CD8-positive, alpha-beta T cell (primary cell): ENCODE measurements at regions of chr11 and their contacts with region 1.

Region 1: DNA sequence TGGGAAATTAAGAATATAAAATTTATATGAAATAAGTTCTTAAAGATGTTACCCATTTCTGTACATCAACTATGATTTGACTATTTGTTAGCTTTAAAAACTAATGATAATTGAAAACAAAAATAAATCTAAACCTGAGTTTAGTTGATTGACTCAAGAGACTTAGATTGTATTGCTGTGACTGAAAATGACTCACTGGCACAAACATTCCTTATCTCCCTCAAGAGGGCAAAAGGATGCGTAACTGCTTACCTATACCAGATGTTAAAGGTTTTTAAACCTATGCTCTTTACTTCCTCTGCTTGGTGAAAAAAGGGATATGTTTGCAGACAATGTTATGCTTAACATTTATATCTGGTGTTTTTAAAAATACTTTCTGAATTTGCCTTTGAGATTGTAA is 30.3 kb downstream of the ATM start:
- DNase-seq: peak in 1 of 9 experiments; percentile 46
- ATAC-seq: peak; percentile 76
- H3K4me3 ChIP-seq: no peak overlapping the region
- H3K4me3 Mint-ChIP-seq: no peak overlapping the region
- H3K27ac ChIP-seq: peak overlapping the region in 1 of 2 experiments; percentile 41
- H3K27ac Mint-ChIP-seq: peak overlapping the region; percentile 64
- H3K4me1 ChIP-seq: peaks cover 45% of the 10 kb centered on the region
- H3K4me1 Mint-ChIP-seq: peaks cover 57% of the 10 kb centered on the region
- H3K27me3 ChIP-seq: no peaks in the 10 kb centered on the region
- H3K27me3 Mint-ChIP-seq: no peaks in the 10 kb centered on the region
- CTCF ChIP-seq: no peak

Region 2: DNA sequence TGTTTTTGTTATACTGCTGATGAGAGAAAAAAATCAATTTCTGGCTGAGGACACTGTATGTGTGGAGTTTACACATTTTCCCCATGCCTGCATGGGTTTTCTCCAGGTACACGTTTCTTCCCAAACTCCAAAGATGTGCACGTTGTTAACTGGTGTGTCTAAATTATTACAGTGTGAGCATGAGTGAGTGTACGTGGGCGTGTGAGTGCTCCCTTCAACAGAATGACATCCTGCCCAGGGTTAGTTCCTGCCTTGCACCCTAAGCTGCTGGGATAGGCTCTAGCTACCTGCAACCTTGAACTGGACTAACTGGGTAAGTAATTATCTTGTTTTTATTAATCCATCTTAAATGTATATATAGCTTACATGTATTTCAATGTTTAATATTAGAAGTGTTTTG is 36.2 kb before region 1 on chr11:
- CTCF ChIA-PET with region 1: no interaction called
- POLR2A ChIA-PET with region 1: interaction called, 40 read pairs
- intact Hi-C with region 1: loop called in 1 of 2 experiments (anchors 5 kb)
- DNase-seq: peak in 1 of 9 experiments; percentile 43
- ATAC-seq: peak; percentile 51
- H3K4me3 ChIP-seq: no peak overlapping the region
- H3K4me3 Mint-ChIP-seq: peak overlapping the region; percentile 47
- H3K27ac ChIP-seq: no peak overlapping the region
- H3K27ac Mint-ChIP-seq: peak overlapping the region; percentile 53
- H3K4me1 ChIP-seq: peaks cover 71% of the 10 kb centered on the region
- H3K4me1 Mint-ChIP-seq: peaks cover 76% of the 10 kb centered on the region
- H3K27me3 ChIP-seq: no peaks in the 10 kb centered on the region
- H3K27me3 Mint-ChIP-seq: no peaks in the 10 kb centered on the region
- CTCF ChIP-seq: no peak

Region 3: DNA sequence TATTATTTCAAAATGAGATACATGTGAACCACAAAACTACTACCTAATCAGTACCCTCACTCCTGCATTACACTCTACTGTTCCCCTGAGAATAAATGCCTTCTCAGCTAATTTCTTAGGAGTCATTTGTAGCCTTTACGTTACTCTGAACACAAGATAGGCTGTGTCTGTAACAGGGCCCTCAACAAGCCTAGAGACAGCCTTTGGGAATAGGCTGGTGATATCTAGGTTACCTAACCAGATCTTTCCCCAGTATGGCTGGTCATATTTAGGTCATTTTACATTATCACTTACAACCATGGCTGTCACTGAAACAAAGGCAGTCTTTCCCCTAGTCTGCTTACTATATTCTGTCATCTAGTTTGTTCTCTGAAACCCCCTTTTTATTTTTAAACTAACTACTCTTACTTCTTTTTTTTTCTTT is 16.1 kb before region 1 on chr11:
- CTCF ChIA-PET with region 1: interaction called, 6 read pairs
- POLR2A ChIA-PET with region 1: interaction called, 28 read pairs
- intact Hi-C with region 1: loop called in 1 of 2 experiments (anchors 1 kb)
- DNase-seq: peak in 2 of 9 experiments; percentile 59 to 75
- ATAC-seq: peak; percentile 39
- H3K4me3 ChIP-seq: peak overlapping the region; percentile 2 to 35
- H3K4me3 Mint-ChIP-seq: peak overlapping the region; percentile 72
- H3K27ac ChIP-seq: peak overlapping the region; percentile 57 to 82
- H3K27ac Mint-ChIP-seq: peak overlapping the region; percentile 96
- H3K4me1 ChIP-seq: peaks cover 95% of the 10 kb centered on the region
- H3K4me1 Mint-ChIP-seq: peaks cover 83% of the 10 kb centered on the region
- H3K27me3 ChIP-seq: no peaks in the 10 kb centered on the region
- H3K27me3 Mint-ChIP-seq: no peaks in the 10 kb centered on the region
- CTCF ChIP-seq: no peak

Region 4: GRCh38 chr11:108269583-108269982 is 16.4 kb after region 1 on chr11:
- CTCF ChIA-PET with region 1: interaction called, 3 read pairs
- POLR2A ChIA-PET with region 1: no interaction called
- intact Hi-C with region 1: loop called in 1 of 2 experiments (anchors 2 kb)
- DNase-seq: no peak
- ATAC-seq: no peak
- H3K4me3 ChIP-seq: no peak overlapping the region
- H3K4me3 Mint-ChIP-seq: no peak overlapping the region
- H3K27ac ChIP-seq: no peak overlapping the region
- H3K27ac Mint-ChIP-seq: peak overlapping the region; percentile 68
- H3K4me1 ChIP-seq: peaks cover 9% of the 10 kb centered on the region
- H3K4me1 Mint-ChIP-seq: peaks cover 29% of the 10 kb centered on the region
- H3K27me3 ChIP-seq: no peaks in the 10 kb centered on the region
- H3K27me3 Mint-ChIP-seq: no peaks in the 10 kb centered on the region
- CTCF ChIP-seq: no peak

Region 5: DNA sequence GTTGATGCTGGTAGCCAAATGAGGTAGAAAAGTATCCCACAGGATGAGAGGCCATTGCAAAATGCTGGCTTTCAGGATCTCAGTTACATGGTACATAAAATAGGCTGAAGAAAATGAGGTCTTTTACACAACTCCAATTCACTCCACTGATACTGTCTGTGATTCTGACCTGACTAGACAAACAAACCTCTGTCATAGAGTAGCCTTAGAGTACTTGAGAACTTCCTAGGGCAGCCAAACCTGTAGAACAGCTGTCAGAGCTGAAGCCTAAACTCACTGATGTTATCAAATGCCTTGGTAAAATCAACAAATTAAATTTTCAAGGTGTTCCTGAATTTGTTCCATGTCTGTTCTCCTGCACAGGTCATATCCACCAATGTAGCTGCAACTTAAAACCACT is 271.3 kb after region 1 on chr11:
- CTCF ChIA-PET with region 1: no interaction called
- POLR2A ChIA-PET with region 1: no interaction called
- intact Hi-C with region 1: no loop called
- DNase-seq: no peak
- ATAC-seq: no peak
- H3K4me3 ChIP-seq: no peak overlapping the region
- H3K4me3 Mint-ChIP-seq: no peak overlapping the region
- H3K27ac ChIP-seq: no peak overlapping the region
- H3K27ac Mint-ChIP-seq: no peak overlapping the region
- H3K4me1 ChIP-seq: no peaks in the 10 kb centered on the region
- H3K4me1 Mint-ChIP-seq: no peaks in the 10 kb centered on the region
- H3K27me3 ChIP-seq: no peaks in the 10 kb centered on the region
- H3K27me3 Mint-ChIP-seq: no peaks in the 10 kb centered on the region
- CTCF ChIP-seq: no peak